Transverse colon (tissue), 4 donors: ENCODE measurements at regions of chr7 and their contacts with region 1.

Region 1: GRCh38 chr7:123682690-123683089 is 27.0 kb downstream of the LMOD2 start:
- DNase-seq: no peak
- H3K4me3 ChIP-seq: no peak overlapping the region
- H3K27ac ChIP-seq: no peak overlapping the region
- H3K4me1 ChIP-seq: no peaks in the 10 kb centered on the region
- H3K27me3 ChIP-seq: no peaks in the 10 kb centered on the region
- CTCF ChIP-seq: peak; percentile 41 to 52 (median 46)
- EP300 ChIP-seq: no peak
- POLR2A ChIP-seq: no peak

Region 2: DNA sequence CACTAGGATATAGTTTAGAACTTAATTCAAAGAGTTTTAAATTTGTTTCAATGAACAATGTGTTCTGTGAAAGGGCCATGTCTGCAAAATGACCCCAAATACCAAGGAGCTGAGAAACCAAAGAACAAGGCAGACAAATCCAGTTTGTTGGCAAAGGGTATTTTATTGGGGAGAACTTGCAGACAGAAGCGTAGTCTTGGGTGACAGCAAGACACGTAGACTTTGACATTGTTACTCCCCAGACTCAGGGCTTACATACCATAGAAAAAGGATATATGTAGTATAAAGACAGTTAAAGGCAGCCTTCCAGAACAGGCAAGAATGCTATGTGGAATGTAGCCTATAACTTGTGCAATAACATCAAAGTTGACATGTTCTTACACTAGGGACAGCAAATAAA is 592.2 kb before region 1 on chr7:
- in situ Hi-C with region 1: no loop called
- intact Hi-C with region 1: no loop called
- DNase-seq: no peak
- H3K4me3 ChIP-seq: no peak overlapping the region
- H3K27ac ChIP-seq: no peak overlapping the region
- H3K4me1 ChIP-seq: no peaks in the 10 kb centered on the region
- H3K27me3 ChIP-seq: no peaks in the 10 kb centered on the region
- CTCF ChIP-seq: no peak
- EP300 ChIP-seq: no peak
- POLR2A ChIP-seq: no peak

Region 3: DNA sequence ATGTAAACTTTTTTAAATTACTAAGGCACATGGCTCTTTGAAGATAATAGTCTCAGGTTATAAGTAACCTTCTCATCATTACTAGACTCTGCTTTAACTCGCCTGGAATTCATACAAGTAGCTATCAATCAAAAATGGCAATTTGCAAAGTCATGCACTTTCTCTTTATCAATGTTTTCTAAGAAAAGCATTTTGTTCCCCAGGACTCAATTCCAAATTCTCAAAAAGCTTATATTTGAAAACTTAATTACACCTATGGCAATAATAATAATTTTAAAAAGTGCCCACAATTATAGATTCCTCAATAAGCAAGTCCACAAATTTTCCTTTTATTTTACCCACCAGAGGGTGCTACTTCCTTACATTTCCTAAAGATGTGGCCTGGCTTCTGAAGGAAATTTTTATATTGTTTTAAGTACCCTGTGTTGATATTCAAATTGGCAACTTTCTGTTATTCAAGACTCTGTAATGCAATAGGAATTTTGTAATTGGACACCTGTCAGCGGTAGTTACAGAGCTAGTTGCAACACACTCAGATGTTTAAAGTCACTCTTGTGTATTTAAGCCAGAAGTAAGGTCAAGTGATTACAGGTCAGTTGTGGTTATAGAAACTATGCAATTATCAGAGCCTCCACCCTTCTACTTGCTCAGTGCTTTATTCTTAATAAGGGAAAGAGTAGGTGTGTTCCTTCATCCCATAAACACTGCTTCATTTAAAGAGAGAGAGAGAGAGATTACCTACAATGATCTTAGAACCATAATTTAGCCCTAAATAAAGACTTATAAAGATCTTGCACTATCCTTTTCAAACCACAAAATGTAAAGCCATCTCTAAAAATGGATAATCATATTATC is 115.2 kb after region 1 on chr7:
- in situ Hi-C with region 1: loop called in 1 of 4 experiments (anchors 25 kb)
- intact Hi-C with region 1: no loop called
- DNase-seq: no peak
- H3K4me3 ChIP-seq: peak overlapping the region in 1 of 4 donors; percentile 30
- H3K27ac ChIP-seq: peak overlapping the region; percentile 55 to 77 (median 60)
- H3K4me1 ChIP-seq: peaks cover 6 to 45% (median 18%) of the 10 kb centered on the region in 4 donors
- H3K27me3 ChIP-seq: no peaks in the 10 kb centered on the region
- CTCF ChIP-seq: peak; percentile 47 to 74 (median 57)
- EP300 ChIP-seq: no peak
- POLR2A ChIP-seq: no peak